Left lung (tissue), 14 donors: ENCODE measurements at regions of chr3 and their contacts with region 1.

Region 1: GRCh38 chr3:167882067-167882667 is 146.6 kb downstream of the SERPINI1 start:
- DNase-seq: peak in 2 of 4 donors; percentile 30 to 51
- ATAC-seq: peak; percentile 79
- H3K4me3 ChIP-seq: no peak overlapping the region
- H3K27ac ChIP-seq: no peak overlapping the region
- H3K4me1 ChIP-seq: peaks cover 0 to 7% of the 10 kb centered on the region in 2 donors
- H3K27me3 ChIP-seq: no peaks in the 10 kb centered on the region
- CTCF ChIP-seq: peak; percentile 22 to 53

Region 2: GRCh38 chr3:167837466-167837865 is 44.7 kb before region 1 on chr3:
- intact Hi-C with region 1: loop called in 1 of 2 experiments (anchors 5 kb)
- DNase-seq: no peak
- ATAC-seq: peak; percentile 32
- H3K4me3 ChIP-seq: no peak overlapping the region
- H3K27ac ChIP-seq: no peak overlapping the region
- H3K4me1 ChIP-seq: no peaks in the 10 kb centered on the region
- H3K27me3 ChIP-seq: no peaks in the 10 kb centered on the region
- CTCF ChIP-seq: peak in 1 of 2 donors; percentile 14